BJ (cell line): ENCODE measurements at regions of chr1 and their contacts with region 1.

Region 1: DNA sequence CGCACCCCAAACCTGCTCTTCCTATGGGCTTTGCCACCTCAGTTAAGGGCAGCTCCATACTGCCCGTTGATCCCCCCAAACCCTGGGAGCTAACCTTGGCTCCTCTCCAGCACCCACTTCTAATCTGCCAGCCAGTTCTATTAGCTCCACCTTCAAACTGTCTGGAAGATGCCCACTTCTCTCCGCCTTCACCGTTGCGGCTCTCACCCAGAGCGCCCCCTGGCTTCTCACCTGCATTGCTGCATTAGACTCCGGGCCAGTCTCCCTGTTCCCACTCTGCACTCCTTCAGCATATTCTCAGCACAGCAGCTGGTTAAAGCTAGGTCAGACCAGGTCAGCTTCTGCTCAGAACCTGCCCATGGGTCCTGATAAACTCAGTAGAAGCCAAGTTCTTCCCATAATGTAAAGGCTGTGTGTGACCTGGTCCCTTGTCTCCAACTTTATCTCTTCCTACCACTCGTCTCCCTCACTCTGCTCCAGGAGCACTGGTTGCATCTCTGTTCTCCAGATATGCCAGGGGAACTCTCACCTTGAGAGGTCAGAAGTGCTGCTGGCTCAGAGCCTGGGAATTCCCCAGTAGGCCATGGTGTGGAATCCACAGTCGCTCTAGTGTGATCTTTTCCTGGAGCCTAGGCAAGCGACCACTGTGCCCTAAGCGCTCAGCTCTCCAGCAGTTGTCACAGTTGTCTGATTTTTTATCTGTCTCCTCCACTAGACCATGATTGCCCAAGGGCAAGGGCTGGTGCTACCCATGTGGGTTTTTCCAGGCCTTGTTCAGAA is 150.3 kb downstream of the HMGB4 start:
- DNase-seq: no peak
- H3K4me3 ChIP-seq: no peak overlapping the region
- H3K27me3 ChIP-seq: no peaks in the 10 kb centered on the region
- CTCF ChIP-seq: peak; percentile 71

Region 2: GRCh38 chr1:33735621-33736020 is 278.5 kb before region 1 on chr1:
- CTCF ChIA-PET with region 1: interaction called, 47 read pairs
- POLR2A ChIA-PET with region 1: no interaction called
- DNase-seq: no peak
- H3K4me3 ChIP-seq: no peak overlapping the region
- H3K27me3 ChIP-seq: no peaks in the 10 kb centered on the region
- CTCF ChIP-seq: peak; percentile 44

Region 3: DNA sequence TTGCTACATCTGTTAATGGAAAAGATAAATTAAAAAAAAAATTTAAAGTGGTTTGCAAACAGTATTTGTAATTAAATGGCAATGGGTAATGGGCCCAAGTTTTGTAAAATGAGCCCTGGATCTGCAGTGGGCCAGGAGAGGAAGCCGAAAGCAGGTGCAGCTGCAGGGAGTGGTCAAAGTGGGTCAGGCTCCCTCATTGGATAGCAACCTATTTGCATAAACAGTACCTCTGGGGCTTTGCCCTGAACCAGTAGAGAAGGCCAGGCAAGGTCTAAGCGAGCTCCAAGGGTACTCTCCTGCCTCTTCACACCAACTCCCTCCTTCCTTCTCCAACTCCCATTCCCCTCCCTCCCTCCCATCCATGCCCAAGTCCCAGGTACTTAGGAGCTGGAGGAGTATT is 11.3 kb before region 1 on chr1:
- CTCF ChIA-PET with region 1: interaction called, 12 read pairs
- POLR2A ChIA-PET with region 1: interaction called, 4 read pairs
- DNase-seq: no peak
- H3K4me3 ChIP-seq: no peak overlapping the region
- H3K27me3 ChIP-seq: no peaks in the 10 kb centered on the region
- CTCF ChIP-seq: no peak

Region 4: DNA sequence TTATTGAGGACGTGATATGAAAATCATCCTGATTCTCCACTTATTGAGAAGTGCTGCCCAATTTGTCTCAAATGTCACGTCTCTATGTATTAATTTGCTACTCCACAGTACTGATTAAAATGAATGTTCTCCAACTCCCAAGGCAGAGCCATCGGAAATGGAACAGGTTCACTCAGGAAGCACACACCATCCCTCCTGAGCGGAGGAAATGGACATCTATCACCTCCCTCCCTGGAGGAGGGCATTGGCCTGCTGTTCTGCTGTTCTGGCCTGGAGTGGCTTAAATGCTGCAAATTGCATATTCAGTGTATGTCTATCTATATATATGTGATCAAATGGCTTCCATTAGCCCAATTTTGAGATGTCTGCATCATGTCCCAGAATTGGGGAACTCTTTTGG is 10.3 kb after region 1 on chr1:
- CTCF ChIA-PET with region 1: interaction called, 21 read pairs
- POLR2A ChIA-PET with region 1: no interaction called
- DNase-seq: no peak
- H3K4me3 ChIP-seq: no peak overlapping the region
- H3K27me3 ChIP-seq: no peaks in the 10 kb centered on the region
- CTCF ChIP-seq: no peak

Region 5: DNA sequence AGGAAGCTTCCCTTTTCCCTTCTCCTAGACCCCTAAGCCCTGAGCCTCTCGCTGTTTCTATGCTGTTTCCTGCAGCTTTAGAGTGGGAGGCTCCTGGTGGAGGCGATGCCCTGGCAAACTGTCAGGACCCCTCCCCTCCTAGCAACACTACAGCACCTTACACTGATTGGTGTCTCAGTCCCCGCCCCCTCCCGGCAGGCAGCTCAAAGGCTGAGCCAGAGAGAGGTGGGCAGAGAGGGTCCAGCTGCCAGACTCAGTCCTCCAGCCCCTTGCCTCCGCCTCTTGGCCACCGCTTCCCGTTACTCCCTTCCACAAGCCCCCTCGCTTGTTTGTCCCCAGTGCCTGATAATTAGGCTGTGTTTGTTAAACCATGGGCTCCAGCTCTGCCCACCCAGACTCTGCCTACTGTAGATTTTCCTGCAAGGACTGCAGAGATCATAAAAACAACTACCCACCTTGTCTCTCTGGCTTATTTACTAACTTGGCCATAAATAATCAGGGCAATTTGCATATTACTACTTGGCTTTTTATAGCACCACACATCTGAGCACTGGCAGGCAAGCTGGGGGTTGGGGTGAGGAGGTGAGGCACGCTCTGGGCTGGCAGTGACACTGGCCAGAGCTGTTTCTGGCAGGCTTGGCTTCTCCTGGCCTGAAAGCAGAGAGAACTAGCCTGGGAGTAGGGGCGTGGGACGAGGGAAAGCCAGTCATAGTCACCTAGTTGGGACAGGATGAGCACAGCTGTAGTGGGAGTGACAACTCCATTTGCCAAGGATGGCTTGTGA is 43.4 kb after region 1 on chr1:
- CTCF ChIA-PET with region 1: no interaction called
- POLR2A ChIA-PET with region 1: no interaction called
- DNase-seq: no peak
- H3K4me3 ChIP-seq: no peak overlapping the region
- H3K27me3 ChIP-seq: no peaks in the 10 kb centered on the region
- CTCF ChIP-seq: no peak